ENCODE measurements at regions of chr1 and their contacts with region 1.

Region 1: DNA sequence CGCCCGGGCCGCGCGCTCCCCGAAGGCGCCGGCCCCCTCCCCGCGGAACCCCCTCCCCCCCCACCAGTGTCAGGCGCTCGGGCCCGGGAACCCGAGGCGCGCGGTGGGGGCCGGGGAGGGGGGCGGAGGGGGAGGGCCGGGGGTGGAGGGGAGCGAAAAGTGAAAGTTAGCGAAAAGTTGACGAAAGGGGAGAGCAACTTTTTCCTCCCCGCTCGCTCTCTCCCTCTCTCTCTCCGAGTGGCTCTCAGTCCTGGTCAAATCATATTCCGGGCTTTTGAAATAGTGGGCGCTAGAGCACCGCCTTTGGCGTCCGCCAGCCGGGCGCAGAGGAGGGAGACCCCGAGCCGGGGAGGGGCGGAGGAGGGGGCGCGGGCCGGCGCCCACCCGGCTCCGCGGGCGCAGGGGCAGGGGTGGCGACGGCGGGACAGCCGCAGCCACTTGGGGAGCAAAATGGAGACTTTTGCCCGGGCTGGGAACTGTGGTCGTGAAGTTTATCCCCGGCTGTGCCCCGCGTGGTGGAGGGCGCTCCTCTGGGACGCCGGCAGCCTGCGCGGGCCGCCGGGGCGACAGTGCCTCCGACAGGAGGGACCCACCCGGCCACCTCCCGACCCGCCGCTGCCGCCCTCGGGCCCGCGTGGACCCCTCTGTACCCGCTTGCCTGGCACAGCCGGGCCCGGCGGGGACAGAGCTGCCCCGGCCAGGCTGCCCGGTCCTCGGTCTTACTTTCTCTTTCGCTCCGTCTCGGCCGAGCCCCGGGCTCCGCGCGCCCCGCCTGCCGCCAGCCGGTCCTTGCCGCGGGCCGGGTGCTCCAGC is 694 bp downstream of the PRDM16 start:
- DNase-seq: peak; percentile 23
- H3K27ac ChIP-seq: peak overlapping the region; percentile 34; the same call in 1 of the 2 replicates
- CTCF ChIP-seq: 0 out of 2 replicates have a peak, but pooled peaks have one; percentile 21

Region 2: GRCh38 chr1:2840036-2840809 is 229.5 kb before region 1 on chr1:
- CTCF ChIA-PET with region 1: no interaction called
- POLR2A ChIA-PET with region 1: no interaction called
- DNase-seq: no peak
- H3K27ac ChIP-seq: no peak overlapping the region
- CTCF ChIP-seq: no peak

Region 3: DNA sequence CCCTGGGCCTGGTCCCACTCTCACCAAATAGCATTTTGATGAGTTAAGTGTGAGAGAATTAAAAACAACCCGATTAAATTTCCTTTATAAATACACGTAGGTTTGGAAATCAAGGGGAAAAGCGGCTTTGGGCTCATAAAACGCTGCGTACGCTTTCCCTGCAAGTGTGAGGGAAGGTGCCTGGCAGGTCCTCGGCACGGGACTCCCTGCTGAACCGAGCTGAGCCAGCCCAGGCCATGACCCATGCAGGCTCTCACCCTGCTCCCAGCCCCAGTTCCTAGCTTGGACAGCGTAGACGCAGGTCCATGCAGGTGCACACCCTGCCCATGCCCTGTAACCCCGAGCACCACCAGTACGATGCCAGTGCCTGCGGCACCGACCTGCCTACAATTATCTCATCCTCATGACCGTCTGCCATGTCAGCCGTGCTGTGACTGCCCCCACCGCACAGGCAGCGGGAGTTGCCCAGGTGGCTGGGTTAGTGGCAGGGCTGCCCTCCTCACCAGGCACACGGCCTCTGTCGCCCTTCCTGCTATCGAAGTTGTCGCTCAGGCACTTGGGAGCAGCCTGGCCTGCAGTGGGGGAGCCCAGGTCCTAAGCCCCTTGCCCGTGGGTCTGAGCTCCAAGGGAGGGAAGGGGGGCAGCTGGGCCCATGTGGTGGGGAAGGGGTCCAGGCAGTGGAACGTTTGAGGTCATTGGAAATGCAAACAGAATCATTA is 89.5 kb before region 1 on chr1:
- CTCF ChIA-PET with region 1: no interaction called
- POLR2A ChIA-PET with region 1: interaction called, 13 read pairs
- DNase-seq: no peak
- H3K27ac ChIP-seq: no peak overlapping the region
- CTCF ChIP-seq: no peak

Region 4: GRCh38 chr1:3237994-3238702 is 168.5 kb after region 1 on chr1:
- CTCF ChIA-PET with region 1: no interaction called
- POLR2A ChIA-PET with region 1: no interaction called
- DNase-seq: no peak
- H3K27ac ChIP-seq: no peak overlapping the region
- CTCF ChIP-seq: no peak